Left cardiac atrium (tissue), 4 donors: ENCODE measurements at regions of chr1 and their contacts with region 1.

Region 1: GRCh38 chr1:59879574-59879973 is 47.0 kb downstream of the CYP2J2 start:
- DNase-seq: peak; percentile 78
- ATAC-seq: peak; percentile 91 to 94

Region 2: GRCh38 chr1:59947047-59947938 is 67.7 kb after region 1 on chr1:
- intact Hi-C with region 1: loop called (anchors 1 to 5 kb)
- DNase-seq: peak; percentile 31
- ATAC-seq: peak; percentile 93

Region 3: GRCh38 chr1:60185684-60186083 is 306.1 kb after region 1 on chr1:
- intact Hi-C with region 1: no loop called
- DNase-seq: no peak
- ATAC-seq: no peak